ENCODE measurements at regions of chr9 and their contacts with region 1.

Region 1: GRCh38 chr9:124861342-124862229 is at the starts of genes ARPC5L and RPL35:
- DNase-seq: peak; percentile 91 to 98 (median 95)
- H3K4me3 ChIP-seq: peak within 1 kb of the TSS; percentile 64 to 97 (median 86)
- H3K27ac ChIP-seq: peak within 1 kb of the TSS; percentile 14 to 94 (median 86)
- H3K27me3 ChIP-seq: no peaks in the 10 kb centered on the region
- CTCF ChIP-seq: peak in 27 of 56 donors; percentile 8 to 56 (median 28)
- total RNA-seq, gene ARPC5L: 25.7 to 85.1 (median 57.9) TPM
- total RNA-seq, gene RPL35: 334 to 549 (median 424) TPM

Region 2: DNA sequence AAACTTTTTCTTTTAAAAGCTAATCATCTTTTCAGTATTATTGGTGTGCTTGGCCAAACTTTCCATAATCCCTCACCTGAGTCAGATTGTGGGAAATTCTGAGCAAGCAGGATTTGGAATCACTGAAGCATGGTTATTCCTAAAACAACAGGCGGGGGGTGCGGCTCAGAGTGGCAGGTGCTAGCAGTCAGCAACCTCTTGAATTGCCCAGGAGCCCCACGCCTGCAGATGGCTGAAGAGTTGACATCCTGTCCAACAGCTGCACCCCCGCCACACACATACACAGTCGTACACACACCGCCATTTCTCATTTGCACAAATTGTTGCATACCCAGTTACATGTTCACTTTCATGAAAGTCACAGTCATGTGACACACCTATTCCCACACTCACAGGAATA is 753.4 kb before region 1 on chr9:
- intact Hi-C with region 1: no loop called
- DNase-seq: no peak
- H3K4me3 ChIP-seq: no peak overlapping the region
- H3K27ac ChIP-seq: no peak overlapping the region
- H3K27me3 ChIP-seq: peaks cover 0 to 4% (median 0%) of the 10 kb centered on the region in 45 donors
- CTCF ChIP-seq: no peak

Region 3: GRCh38 chr9:124415102-124415851 is 446.3 kb before region 1 on chr9 and contains the start of gene PSMB7:
- intact Hi-C with region 1: loop called (anchors 10 kb)
- DNase-seq: peak; percentile 92 to 97 (median 95)
- H3K4me3 ChIP-seq: peak within 1 kb of the TSS; percentile 58 to 99 (median 91)
- H3K27ac ChIP-seq: peak within 1 kb of the TSS in 27 of 59 donors; percentile 1 to 83 (median 53)
- H3K27me3 ChIP-seq: no peaks in the 10 kb centered on the region
- CTCF ChIP-seq: peak; percentile 86 to 99 (median 97)
- total RNA-seq, gene PSMB7: 64.5 to 154 (median 123) TPM

Region 4: DNA sequence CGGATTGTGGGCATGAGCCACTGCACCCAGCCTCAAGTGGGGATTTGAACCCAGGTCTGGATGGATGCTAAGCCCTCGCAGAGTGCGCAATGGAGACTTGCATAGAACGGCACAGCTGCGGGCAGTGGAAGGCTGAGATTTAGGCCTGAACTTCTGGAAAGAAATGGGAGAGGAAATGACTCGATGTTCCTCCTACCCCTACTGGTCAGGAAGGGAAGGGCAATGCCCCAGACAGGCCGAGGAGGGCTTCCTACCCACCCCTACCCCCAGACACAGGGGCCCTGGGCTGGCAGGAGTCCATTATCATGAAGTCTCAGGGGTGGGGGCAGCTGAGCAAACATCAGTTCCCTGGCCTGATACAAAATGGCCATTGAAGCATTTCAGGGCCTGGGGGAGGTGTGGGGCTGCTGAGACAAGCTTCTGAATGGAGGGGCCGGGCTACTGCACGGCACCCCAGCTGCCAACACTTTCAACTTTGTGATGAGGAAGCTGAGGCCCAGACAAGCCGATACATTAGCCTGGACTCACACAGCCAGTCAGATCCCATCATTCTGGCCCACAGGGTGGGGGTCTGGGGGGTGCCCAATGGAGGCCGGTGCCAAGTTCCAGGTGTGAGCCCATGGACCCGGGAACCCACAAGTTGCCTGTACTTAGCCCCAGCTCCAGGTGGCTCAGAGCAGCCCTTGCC is 21.8 kb before region 1 on chr9:
- intact Hi-C with region 1: no loop called
- DNase-seq: no peak
- H3K4me3 ChIP-seq: no peak overlapping the region
- H3K27ac ChIP-seq: no peak overlapping the region
- H3K27me3 ChIP-seq: no peaks in the 10 kb centered on the region
- CTCF ChIP-seq: peak in 17 of 56 donors; percentile 5 to 46 (median 18)

Region 5: GRCh38 chr9:124940693-124941453 is 79.3 kb after region 1 on chr9 and contains the start of gene GOLGA1:
- intact Hi-C with region 1: loop called (anchors 5 kb)
- DNase-seq: peak; percentile 87 to 95 (median 92)
- H3K4me3 ChIP-seq: peak within 1 kb of the TSS; percentile 58 to 100 (median 95)
- H3K27ac ChIP-seq: peak within 1 kb of the TSS; percentile 63 to 99 (median 96)
- H3K27me3 ChIP-seq: no peaks in the 10 kb centered on the region
- CTCF ChIP-seq: peak in 27 of 56 donors; percentile 5 to 58 (median 28)
- total RNA-seq, gene GOLGA1: 16.5 to 38.0 (median 25.8) TPM

Region 6: GRCh38 chr9:124980429-124980828 is 118.8 kb after region 1 on chr9:
- intact Hi-C with region 1: no loop called
- DNase-seq: no peak
- H3K4me3 ChIP-seq: no peak overlapping the region
- H3K27ac ChIP-seq: no peak overlapping the region
- H3K27me3 ChIP-seq: no peaks in the 10 kb centered on the region
- CTCF ChIP-seq: no peak

Region 7: GRCh38 chr9:125126019-125126746 is 264.6 kb after region 1 on chr9:
- intact Hi-C with region 1: no loop called
- DNase-seq: peak; percentile 50 to 92 (median 83)
- H3K4me3 ChIP-seq: no peak overlapping the region
- H3K27ac ChIP-seq: peak overlapping the region in 39 of 59 donors; percentile 4 to 86 (median 62)
- H3K27me3 ChIP-seq: no peaks in the 10 kb centered on the region
- CTCF ChIP-seq: no peak

Region 8: DNA sequence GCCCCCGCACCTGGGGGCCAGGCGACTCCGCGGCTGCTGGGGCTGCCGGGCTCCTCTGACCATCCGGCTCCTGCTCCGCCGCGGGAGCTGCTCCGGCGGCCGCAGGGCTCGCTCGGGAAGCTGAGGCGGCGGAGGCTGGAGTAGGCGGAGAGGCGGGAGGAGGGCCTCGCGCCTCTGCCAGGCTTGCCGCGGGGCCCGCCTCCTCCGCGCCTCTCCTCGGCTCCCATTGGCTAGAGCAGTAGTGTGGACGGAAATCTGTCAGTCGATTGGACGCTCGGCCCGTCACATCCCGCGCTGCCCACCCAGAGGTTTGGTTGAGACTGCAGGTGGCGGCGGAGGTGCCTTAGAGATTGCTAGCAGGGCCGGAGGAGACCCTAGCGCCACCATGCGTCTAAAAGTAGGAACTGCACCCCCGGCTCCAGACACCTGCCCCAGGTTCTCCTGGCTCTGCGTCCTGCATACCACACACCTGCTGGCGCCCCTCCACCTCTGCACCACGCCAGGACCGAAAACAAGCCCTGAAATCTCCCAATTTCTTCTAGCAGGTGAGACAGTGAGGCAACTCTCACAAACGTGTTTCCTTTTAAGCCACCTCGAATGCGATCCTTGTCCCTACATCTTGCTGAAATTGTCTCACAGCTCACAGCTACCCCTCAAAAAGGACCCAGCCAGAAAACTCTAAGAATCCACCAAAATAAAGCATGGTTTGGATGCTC is 281.9 kb after region 1 on chr9 and contains the start of gene SCAI:
- intact Hi-C with region 1: loop called (anchors 5 kb)
- DNase-seq: peak; percentile 98 to 100 (median 99)
- H3K4me3 ChIP-seq: peak within 1 kb of the TSS; percentile 33 to 80 (median 68)
- H3K27ac ChIP-seq: peak within 1 kb of the TSS in 42 of 59 donors; percentile 8 to 84 (median 62)
- H3K27me3 ChIP-seq: no peaks in the 10 kb centered on the region
- CTCF ChIP-seq: peak; percentile 93 to 100 (median 99)
- total RNA-seq, gene SCAI: 19.8 to 73.6 (median 49.9) TPM

Region 9: GRCh38 chr9:125374443-125375309 is 513.1 kb after region 1 on chr9:
- intact Hi-C with region 1: loop called in 1 of 2 experiments (anchors 5 kb)
- DNase-seq: peak; percentile 42 to 81 (median 70)
- H3K4me3 ChIP-seq: peak overlapping the region in 57 of 59 donors; percentile 15 to 68 (median 48)
- H3K27ac ChIP-seq: peak overlapping the region in 3 of 59 donors; percentile 22 to 44 (median 39)
- H3K27me3 ChIP-seq: no peaks in the 10 kb centered on the region
- CTCF ChIP-seq: peak; percentile 31 to 86 (median 74)

Measured in dorsolateral prefrontal cortex (tissue), 120 donors.